ENCODE measurements at regions of chr1 and their contacts with region 1.

Region 1: DNA sequence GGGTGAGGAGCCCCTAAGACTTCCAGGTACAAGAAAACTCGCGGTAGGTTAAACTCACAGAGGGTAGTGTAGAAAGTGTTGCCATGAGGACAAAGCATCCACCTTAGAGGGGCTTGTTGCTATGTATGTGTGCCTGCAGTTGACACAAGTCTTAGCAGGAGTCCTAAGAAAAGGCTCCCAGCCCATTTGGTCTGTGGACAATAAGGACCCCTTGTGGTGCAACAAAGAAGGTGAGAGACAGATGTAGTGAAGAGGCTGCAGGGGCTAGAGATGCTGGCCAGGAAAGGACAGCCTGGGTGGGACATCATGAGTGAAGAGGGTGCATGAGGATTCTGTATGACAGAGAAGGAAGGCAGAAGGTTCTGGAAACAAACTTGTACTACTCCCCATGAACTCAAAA is 36.3 kb upstream of the IL10 start:
- DNase-seq: no peak
- H3K4me3 ChIP-seq: no peak overlapping the region
- H3K27ac ChIP-seq: no peak overlapping the region
- H3K4me1 ChIP-seq: no peaks in the 10 kb centered on the region
- H3K27me3 ChIP-seq: peaks cover 3 to 13% of the 10 kb centered on the region in 2 experiments
- CTCF ChIP-seq: peak in 1 of 2 donors; percentile 21
- POLR2A ChIP-seq: no peak

Region 2: GRCh38 chr1:206821493-206821892 is 12.9 kb after region 1 on chr1:
- CTCF ChIA-PET with region 1: interaction called, 11 read pairs
- POLR2A ChIA-PET with region 1: no interaction called
- dilution Hi-C with region 1: no loop called
- intact Hi-C with region 1: no loop called
- DNase-seq: no peak
- H3K4me3 ChIP-seq: no peak overlapping the region
- H3K27ac ChIP-seq: no peak overlapping the region
- H3K4me1 ChIP-seq: peaks cover 5% of the 10 kb centered on the region
- H3K27me3 ChIP-seq: peaks cover 0 to 2% of the 10 kb centered on the region in 2 experiments
- CTCF ChIP-seq: no peak
- POLR2A ChIP-seq: no peak